K562 (cell line): ENCODE measurements at regions of chr4 and their contacts with region 1.

Region 1: DNA sequence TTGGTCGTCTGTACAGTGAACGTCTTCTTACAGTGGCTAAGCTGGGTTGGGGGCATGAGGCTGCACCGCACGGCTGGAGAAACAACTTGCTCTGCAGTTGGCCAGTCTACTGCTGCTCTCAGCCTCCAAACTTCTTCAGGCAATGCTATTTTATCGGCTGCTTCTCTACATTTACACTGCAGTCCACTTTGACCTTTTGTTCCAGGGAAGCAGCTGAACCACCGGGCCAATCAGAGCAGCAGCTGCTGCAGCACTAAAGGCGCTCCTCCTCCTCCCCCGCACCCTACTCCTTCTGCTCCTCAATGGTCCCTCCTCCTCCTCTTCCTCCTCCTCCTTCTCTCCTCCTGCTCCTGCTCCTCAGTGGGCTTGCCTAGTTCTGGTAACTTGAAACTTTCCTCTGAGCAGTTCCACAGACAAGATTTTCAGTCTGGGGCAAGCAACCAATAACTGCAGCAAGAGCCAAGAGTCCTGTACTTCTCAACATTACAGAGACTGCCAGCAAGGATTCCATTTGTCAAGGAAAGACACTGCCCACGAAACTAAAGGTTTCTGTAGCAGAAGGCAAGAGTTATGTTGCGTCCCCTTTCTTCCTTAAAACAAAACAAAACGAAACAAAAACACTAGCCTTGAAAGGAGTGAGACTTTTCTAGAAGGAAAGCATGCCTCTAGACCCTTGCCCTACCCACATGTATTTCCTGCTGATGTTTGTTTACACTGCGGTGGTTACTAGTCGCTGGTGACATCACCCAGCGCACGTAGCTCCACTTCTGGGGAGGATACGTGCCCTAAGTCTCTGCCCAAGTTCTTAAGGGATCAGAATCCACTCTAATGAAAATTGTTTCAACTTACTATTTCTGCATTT is 125.7 kb upstream of the NAP1L5 start:
- DNase-seq: peak; percentile 74 to 92 (median 83)
- ATAC-seq: peak; percentile 95
- H3K4me3 ChIP-seq: peak overlapping the region; percentile 39
- H3K27ac ChIP-seq: peak overlapping the region; percentile 96
- H3K4me1 ChIP-seq: peaks cover 0 to 4% of the 10 kb centered on the region in 2 experiments; a peak in 2 of 5 replicates
- H3K27me3 ChIP-seq: no peaks in the 10 kb centered on the region
- CTCF ChIP-seq: no peak
- EP300 ChIP-seq: peak; percentile 37; the same call in 1 of the 2 replicates
- POLR2A ChIP-seq: peak; percentile 59
- RAD21 ChIP-seq: no peak

Region 2: GRCh38 chr4:88523325-88524129 is 299.8 kb before region 1 on chr4 and contains the start of gene PYURF:
- CTCF ChIA-PET with region 1: no interaction called
- POLR2A ChIA-PET with region 1: no interaction called
- in situ Hi-C with region 1: loop called (anchors 25 kb)
- intact Hi-C with region 1: loop called (anchors 5 kb)
- DNase-seq: peak; percentile 90 to 96 (median 90)
- ATAC-seq: peak; percentile 95
- H3K4me3 ChIP-seq: peak within 1 kb of the TSS; percentile 85
- H3K27ac ChIP-seq: peak within 1 kb of the TSS; percentile 79
- H3K4me1 ChIP-seq: peaks cover 7 to 12% of the 10 kb centered on the region in 2 experiments; a peak in 3 of 5 replicates
- H3K27me3 ChIP-seq: no peaks in the 10 kb centered on the region
- CTCF ChIP-seq: no peak
- EP300 ChIP-seq: peak; percentile 24; the same call in 1 of the 2 replicates
- POLR2A ChIP-seq: peak; percentile 92
- RAD21 ChIP-seq: no peak
- polyA plus RNA-seq, gene PYURF: 22.5 to 42.8 TPM

Region 3: GRCh38 chr4:88728146-88728545 is 95.1 kb before region 1 on chr4:
- CTCF ChIA-PET with region 1: no interaction called
- POLR2A ChIA-PET with region 1: no interaction called
- in situ Hi-C with region 1: no loop called
- intact Hi-C with region 1: no loop called
- DNase-seq: no peak
- ATAC-seq: no peak
- H3K4me3 ChIP-seq: no peak overlapping the region
- H3K27ac ChIP-seq: no peak overlapping the region
- H3K4me1 ChIP-seq: no peaks in the 10 kb centered on the region
- H3K27me3 ChIP-seq: no peaks in the 10 kb centered on the region
- CTCF ChIP-seq: no peak
- EP300 ChIP-seq: no peak
- POLR2A ChIP-seq: no peak
- RAD21 ChIP-seq: no peak

Region 4: DNA sequence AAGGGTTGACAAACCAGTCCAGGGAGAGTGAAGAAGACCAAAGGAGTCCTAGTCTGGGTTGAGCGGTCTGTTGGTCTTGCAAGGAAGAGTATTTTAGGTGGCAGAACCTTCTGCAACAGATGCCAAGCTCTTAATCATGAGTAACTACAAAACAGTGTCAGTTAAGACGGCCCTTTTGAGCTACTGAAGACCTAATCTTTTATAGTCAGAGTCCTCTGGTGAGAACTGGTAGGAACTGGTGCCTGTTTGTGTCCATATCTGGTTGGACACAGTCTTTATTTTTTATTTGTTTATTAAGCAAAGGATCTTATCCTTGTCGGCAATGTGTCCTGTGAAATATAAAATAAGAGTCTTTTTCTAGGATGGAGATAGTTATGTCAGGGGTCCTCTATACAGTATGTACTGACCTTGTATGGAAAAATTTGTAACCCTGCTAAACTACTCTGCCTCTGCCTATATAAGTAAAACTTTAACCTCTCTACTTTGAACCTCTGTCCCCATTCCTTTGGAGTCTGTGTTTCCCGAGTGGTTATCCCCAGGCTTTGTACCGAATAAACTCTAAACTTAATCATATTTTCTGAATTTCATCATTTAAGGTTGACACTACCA is 186.6 kb after region 1 on chr4:
- CTCF ChIA-PET with region 1: no interaction called
- POLR2A ChIA-PET with region 1: interaction called, 3 read pairs
- in situ Hi-C with region 1: loop called (anchors 5 kb)
- intact Hi-C with region 1: no loop called
- DNase-seq: peak in 1 of 4 experiments; percentile 30
- ATAC-seq: peak; percentile 80
- H3K4me3 ChIP-seq: no peak overlapping the region
- H3K27ac ChIP-seq: peak overlapping the region; percentile 66
- H3K4me1 ChIP-seq: peaks cover 0 to 12% of the 10 kb centered on the region in 2 experiments; a peak in 2 of 5 replicates
- H3K27me3 ChIP-seq: no peaks in the 10 kb centered on the region
- CTCF ChIP-seq: no peak
- EP300 ChIP-seq: no peak
- POLR2A ChIP-seq: no peak
- RAD21 ChIP-seq: no peak